GM23248 (cell line): ENCODE measurements at regions of chr10 and their contacts with region 1.

Region 1: GRCh38 chr10:52308251-52309031 is 5.6 kb upstream of the DKK1 start:
- DNase-seq: peak; percentile 87
- H3K4me3 ChIP-seq: peak overlapping the region; percentile 73
- H3K27ac ChIP-seq: no peak overlapping the region
- H3K4me1 ChIP-seq: no peaks in the 10 kb centered on the region; the same call in 1 of the 2 replicates
- H3K27me3 ChIP-seq: no peaks in the 10 kb centered on the region

Region 2: DNA sequence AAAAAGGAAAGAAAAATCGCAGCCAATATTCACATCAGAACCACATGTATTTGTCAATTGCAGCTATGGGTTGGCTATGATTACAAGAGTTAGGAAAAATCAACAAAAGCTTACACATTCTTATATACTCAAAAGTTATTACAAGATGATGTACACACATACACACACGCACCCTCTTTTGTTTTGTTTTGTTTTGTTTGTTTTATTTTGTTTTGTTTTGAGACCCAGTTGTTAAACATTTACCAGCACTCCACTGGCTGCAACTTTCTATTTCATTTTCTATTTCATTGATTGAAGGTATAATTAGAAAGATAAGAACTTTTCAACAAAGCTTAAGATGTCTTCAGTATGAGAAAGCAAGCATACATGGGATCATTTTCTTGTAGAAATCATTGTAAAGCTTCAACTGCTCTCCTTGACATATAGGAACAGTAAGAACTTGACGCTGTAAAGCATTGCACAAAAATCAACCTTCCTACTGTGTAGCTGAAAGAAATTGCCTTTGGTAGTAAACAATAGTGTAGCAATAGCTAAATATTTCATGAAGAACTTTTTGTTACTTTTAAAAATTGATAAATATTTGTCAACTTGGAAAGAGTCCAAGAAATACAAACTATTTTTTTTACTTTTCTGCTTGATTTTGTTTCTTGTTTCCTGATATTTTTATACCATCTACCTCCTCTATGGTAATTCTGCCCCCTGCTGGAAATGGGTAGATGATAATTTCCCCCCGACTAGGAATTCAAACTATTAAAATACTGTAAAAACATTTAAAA is 258.2 kb after region 1 on chr10:
- in situ Hi-C with region 1: loop called (anchors 5 kb)
- DNase-seq: peak; percentile 83
- H3K4me3 ChIP-seq: peak overlapping the region; percentile 39
- H3K27ac ChIP-seq: no peak overlapping the region; the same call in 1 of the 2 replicates
- H3K4me1 ChIP-seq: peaks cover 58% of the 10 kb centered on the region
- H3K27me3 ChIP-seq: no peaks in the 10 kb centered on the region